ENCODE measurements at regions of chr1 and their contacts with region 1.

Region 1: DNA sequence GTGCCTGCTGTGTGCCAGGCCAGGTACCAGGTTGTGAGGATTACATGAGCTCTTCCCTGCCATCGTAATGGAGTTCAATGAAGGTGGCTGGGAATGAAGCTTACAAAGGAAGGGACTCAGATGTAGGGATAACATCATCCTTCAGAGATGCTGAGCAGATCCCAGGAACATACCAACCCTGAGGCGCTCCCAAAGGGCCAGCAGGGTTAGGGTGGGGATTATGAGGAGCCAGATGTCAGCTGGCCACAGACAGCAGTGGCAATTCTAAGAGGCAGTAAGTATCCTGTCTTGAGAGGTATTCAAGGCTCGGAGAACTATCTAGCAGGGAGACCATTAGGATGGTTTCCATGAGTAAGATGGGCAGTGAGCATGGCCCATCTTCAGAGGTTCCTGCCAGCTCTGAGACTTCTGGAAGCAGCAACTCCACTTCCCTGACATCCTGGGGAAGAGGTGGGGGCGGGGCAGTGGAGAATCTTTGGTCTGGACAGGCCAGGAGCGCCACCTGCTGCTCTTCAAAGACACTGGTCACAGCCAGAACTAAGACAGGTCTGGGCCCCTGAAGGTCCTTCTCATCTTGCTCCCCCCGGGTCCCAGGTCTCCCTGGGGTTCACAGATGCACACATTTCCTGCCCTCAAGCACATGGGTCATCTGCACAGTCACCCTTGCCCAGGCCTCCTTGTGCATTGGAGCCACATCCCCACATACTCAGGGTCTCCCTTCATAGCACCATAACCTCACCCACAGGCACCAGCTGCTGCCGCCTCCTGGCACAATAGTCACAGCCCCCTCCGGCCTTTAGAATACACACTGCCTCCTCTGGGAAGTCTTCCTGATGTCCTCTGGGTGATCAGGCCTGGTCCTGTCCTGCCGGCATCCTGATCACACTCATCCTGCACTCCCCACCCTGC is 2.7 kb upstream of the SDC3 start:
- DNase-seq: peak; percentile 91 to 95
- H3K4me3 ChIP-seq: no peak overlapping the region
- H3K27ac ChIP-seq: no peak overlapping the region
- H3K4me1 ChIP-seq: peaks cover 25 to 50% (median 36%) of the 10 kb centered on the region in 4 donors
- H3K27me3 ChIP-seq: peaks cover 0 to 26% (median 7%) of the 10 kb centered on the region in 3 donors
- CTCF ChIP-seq: peak in 5 of 7 experiments; percentile 54 to 90 (median 72)
- EP300 ChIP-seq: no peak
- POLR2A ChIP-seq: no peak

Region 2: DNA sequence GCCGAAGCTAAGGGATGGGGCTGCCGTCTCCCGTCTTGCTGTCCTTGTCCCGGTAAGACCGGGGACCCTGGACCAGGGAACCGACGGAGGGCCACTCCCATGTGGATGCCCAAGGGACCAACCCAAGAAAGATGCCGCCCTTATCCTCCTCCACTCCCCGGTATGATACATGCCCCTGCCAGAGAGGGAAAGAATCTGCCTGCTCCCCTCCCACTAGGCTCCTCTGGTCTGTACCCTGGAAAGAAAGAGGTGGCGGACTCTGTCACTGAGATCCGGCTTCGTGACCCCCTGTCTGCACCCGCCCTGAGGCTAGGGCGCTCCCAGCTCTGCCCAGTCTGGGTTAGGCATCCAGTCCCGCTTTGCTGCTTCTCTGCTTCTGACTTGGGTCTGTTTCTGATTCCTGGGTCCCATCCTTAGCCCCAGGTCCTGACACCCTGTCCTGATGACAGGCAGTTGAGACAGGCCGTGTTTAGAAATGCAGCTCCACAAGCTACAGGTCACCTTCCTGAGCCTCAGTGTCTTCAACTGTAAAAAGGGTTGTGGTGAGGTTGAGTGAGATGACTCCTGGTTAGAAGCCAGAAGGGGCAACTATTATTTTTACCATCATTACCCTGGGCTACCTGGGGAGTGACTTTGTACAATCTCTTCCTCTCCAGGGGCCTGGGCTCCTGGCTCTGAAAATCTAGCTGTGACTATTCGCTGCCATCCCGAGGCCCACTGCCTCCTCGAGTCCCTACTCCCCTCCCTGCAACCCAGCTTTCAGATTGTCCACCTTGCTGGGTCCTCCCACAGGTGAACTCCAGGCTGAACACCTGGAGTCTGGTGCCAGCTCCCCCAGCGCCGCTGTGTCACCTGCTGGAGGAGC is 191.7 kb before region 1 on chr1:
- intact Hi-C with region 1: loop called (anchors 5 kb)
- DNase-seq: no peak
- H3K4me3 ChIP-seq: peak overlapping the region; percentile 35 to 59 (median 58)
- H3K27ac ChIP-seq: peak overlapping the region in 4 of 5 donors; percentile 97 to 100 (median 100)
- H3K4me1 ChIP-seq: peaks cover 12 to 35% (median 14%) of the 10 kb centered on the region in 4 donors
- H3K27me3 ChIP-seq: no peaks in the 10 kb centered on the region
- CTCF ChIP-seq: peak in 1 of 7 experiments; percentile 23
- EP300 ChIP-seq: no peak
- POLR2A ChIP-seq: no peak

Region 3: DNA sequence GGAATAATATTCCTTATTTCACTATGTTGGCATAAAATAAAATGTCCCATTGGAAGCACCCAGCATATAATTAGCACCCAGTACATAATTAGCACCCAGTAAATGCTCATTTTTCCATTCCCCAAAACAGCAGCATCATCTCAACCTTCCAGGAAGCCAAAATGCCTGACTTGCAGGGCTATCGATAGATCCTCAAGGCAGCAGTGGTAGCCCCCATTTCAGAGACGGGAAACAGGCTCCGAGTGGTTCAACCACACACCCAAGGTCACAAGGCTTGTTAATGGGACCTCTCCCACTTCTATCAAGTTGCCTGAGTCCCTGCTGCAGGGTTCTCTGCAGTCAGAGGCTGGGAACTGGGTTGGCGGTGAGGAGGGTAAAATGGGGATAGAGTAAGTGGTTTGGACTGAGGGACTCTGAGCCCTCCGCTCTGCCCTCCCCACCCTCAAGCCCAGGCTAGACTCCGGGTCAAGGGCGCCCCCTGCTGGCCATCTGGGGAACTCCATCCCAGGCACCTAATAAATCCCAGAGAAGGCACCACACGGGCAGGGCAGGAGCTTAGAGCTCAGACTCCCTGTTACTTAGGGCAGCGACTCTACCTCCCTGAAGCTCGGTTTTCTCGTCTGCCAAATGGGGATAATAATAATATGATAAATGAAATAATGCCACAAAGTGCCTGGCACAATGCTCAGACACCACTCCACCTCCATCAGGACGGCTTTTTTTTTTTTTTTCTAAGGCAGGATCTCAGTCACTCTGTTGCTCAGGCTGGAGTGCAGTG is 131.8 kb before region 1 on chr1:
- intact Hi-C with region 1: loop called (anchors 5 kb)
- DNase-seq: peak; percentile 89 to 90
- H3K4me3 ChIP-seq: no peak overlapping the region
- H3K27ac ChIP-seq: no peak overlapping the region
- H3K4me1 ChIP-seq: peaks cover 4 to 20% (median 9%) of the 10 kb centered on the region in 4 donors
- H3K27me3 ChIP-seq: peaks cover 0 to 10% (median 0%) of the 10 kb centered on the region in 3 donors
- CTCF ChIP-seq: peak in 6 of 7 experiments; percentile 89 to 99 (median 96)
- EP300 ChIP-seq: no peak
- POLR2A ChIP-seq: no peak

Region 4: DNA sequence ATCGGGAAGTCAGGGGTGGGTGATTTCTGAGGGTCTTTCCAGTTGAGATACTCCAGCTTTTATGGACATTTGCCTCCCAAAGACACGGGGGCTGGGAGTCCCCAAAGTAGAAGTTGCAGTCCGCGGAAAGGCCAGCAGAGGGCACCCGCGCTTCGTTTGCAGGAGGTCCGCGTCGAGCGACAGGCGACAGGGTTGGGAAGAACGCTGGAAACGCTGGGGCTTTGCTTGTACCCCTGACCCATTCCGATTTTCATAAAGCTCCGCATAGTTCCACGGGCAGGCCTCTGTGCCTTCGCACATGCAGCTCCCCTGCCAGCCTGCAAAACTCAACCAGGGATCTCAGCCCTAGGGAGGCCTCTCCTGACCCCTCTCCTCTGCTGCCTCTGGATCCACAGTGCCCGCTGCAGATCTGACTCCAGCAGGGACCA is 109.5 kb before region 1 on chr1:
- intact Hi-C with region 1: loop called (anchors 5 kb)
- DNase-seq: peak; percentile 89 to 90
- H3K4me3 ChIP-seq: no peak overlapping the region
- H3K27ac ChIP-seq: peak overlapping the region in 1 of 5 donors; percentile 3
- H3K4me1 ChIP-seq: peaks cover 16 to 39% (median 26%) of the 10 kb centered on the region in 4 donors
- H3K27me3 ChIP-seq: peaks cover 0 to 7% (median 0%) of the 10 kb centered on the region in 3 donors
- CTCF ChIP-seq: peak in 5 of 7 experiments; percentile 80 to 95 (median 91)
- EP300 ChIP-seq: no peak
- POLR2A ChIP-seq: no peak

Region 5: GRCh38 chr1:30966690-30967369 is 55.5 kb after region 1 on chr1:
- intact Hi-C with region 1: no loop called
- DNase-seq: peak in 1 of 2 donors; percentile 84
- H3K4me3 ChIP-seq: no peak overlapping the region
- H3K27ac ChIP-seq: peak overlapping the region in 4 of 5 donors; percentile 12 to 61 (median 31)
- H3K4me1 ChIP-seq: peaks cover 11 to 79% (median 38%) of the 10 kb centered on the region in 4 donors
- H3K27me3 ChIP-seq: no peaks in the 10 kb centered on the region
- CTCF ChIP-seq: no peak
- EP300 ChIP-seq: no peak
- POLR2A ChIP-seq: no peak

Measured in stomach (tissue), 19 donors.